ENCODE measurements at regions of chr14 and their contacts with region 1.

Region 1: GRCh38 chr14:23555882-23556699 is at the start of gene THTPA:
- DNase-seq: peak; percentile 96
- ATAC-seq: peak; percentile 86
- H3K4me3 Mint-ChIP-seq: peak within 1 kb of the TSS; percentile 95
- H3K27ac Mint-ChIP-seq: peak within 1 kb of the TSS; percentile 97
- H3K4me1 Mint-ChIP-seq: peaks cover 35% of the 10 kb centered on the region
- H3K27me3 Mint-ChIP-seq: no peaks in the 10 kb centered on the region
- total RNA-seq, gene THTPA: 7.3 to 9.8 TPM

Region 2: DNA sequence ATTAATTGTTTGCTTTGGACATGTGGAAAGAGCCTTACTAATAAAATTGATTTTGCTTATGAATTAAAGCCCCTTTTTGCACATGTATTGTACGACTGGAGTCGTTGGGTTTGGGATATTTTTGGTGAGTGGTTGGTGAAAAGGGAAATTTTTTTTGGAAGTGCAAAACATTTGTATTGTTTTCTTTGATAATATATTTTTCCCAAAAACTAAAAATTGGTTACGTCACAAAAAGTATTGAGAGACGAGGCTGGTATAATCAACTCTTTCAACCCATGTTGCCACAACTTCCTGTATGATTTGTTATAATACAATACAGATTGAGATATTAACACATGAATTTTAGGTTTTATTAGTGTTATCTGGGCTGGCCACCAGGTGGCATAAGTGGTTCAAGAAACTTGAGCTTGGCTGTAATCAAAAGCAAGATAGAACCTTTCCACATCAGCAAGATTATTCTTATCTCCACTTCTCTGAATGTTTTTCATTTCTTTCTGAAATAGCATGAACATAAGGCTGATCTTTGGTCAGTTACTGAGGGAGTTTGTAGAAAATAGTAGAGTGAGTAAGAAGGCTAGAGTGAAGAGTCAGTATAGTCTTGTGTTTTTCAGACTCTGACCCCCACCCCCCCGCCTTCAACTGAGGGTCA is 77.9 kb before region 1 on chr14:
- CTCF ChIA-PET with region 1: interaction called, 266 read pairs
- POLR2A ChIA-PET with region 1: interaction called, 9 read pairs
- DNase-seq: peak; percentile 81
- ATAC-seq: peak; percentile 52
- H3K4me3 Mint-ChIP-seq: no peak overlapping the region
- H3K27ac Mint-ChIP-seq: no peak overlapping the region
- H3K4me1 Mint-ChIP-seq: no peaks in the 10 kb centered on the region
- H3K27me3 Mint-ChIP-seq: no peaks in the 10 kb centered on the region

Region 3: GRCh38 chr14:23539248-23540140 is 16.6 kb before region 1 on chr14:
- CTCF ChIA-PET with region 1: interaction called, 32 read pairs
- POLR2A ChIA-PET with region 1: no interaction called
- DNase-seq: peak; percentile 41
- ATAC-seq: peak; percentile 62
- H3K4me3 Mint-ChIP-seq: no peak overlapping the region
- H3K27ac Mint-ChIP-seq: no peak overlapping the region
- H3K4me1 Mint-ChIP-seq: no peaks in the 10 kb centered on the region
- H3K27me3 Mint-ChIP-seq: peaks cover 2% of the 10 kb centered on the region

Region 4: DNA sequence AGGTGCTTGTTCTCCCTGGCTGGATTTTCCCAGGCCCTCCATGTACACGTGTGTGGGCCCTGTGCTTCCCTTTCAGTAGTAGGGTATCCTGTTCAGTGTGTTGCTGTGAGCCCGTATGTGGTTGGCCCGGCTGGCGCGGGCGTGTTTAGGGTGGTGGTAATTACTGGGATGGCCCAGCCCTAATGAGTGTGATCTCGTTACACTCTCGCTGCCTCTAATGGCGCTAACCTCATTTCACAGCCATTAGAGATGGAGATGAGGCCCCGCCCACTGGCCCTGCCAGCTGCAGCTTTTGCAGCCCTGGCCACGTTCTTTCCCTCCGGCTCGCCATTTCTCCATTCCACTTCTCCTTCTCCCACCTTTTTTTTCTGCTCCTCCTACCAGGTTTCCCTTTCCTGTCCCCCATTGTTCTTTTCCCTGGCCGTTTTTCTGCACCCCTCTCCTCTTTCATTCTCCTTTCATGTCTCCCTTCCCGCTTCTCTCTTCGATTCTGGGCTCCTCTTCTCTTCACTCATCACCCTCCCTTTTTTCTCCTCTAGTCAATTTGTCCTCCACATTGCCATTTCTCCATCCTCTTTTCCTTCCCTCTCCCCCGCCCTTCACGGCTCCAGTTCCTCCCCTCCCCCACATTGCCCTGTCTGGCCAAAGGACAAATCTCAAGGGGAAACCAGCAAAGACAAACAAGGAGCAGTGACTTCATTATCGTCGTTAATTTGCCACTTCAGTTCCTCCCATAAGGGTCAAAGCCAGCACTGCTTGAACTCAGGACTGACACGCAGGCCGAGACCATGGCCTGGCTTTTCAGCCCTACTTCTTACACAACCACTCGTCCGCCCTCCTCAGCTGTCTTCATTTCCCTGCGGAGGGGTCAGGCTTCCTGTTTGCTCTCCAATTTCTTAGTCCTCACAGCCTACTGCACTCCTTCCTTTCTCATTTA is 11.3 kb before region 1 on chr14:
- CTCF ChIA-PET with region 1: interaction called, 32 read pairs
- POLR2A ChIA-PET with region 1: no interaction called
- DNase-seq: no peak
- ATAC-seq: no peak
- H3K4me3 Mint-ChIP-seq: no peak overlapping the region
- H3K27ac Mint-ChIP-seq: no peak overlapping the region
- H3K4me1 Mint-ChIP-seq: no peaks in the 10 kb centered on the region
- H3K27me3 Mint-ChIP-seq: peaks cover under 1% of the 10 kb centered on the region

Region 5: GRCh38 chr14:23567192-23568020 is 11.3 kb after region 1 on chr14 and contains the start of gene AP1G2:
- CTCF ChIA-PET with region 1: interaction called, 20 read pairs
- POLR2A ChIA-PET with region 1: interaction called, 13 read pairs
- DNase-seq: peak; percentile 92
- ATAC-seq: peak; percentile 97
- H3K4me3 Mint-ChIP-seq: peak within 1 kb of the TSS; percentile 100
- H3K27ac Mint-ChIP-seq: peak within 1 kb of the TSS; percentile 99
- H3K4me1 Mint-ChIP-seq: peaks cover 50% of the 10 kb centered on the region
- H3K27me3 Mint-ChIP-seq: peaks cover 5% of the 10 kb centered on the region
- total RNA-seq, gene AP1G2: 267 to 276 TPM

Region 6: DNA sequence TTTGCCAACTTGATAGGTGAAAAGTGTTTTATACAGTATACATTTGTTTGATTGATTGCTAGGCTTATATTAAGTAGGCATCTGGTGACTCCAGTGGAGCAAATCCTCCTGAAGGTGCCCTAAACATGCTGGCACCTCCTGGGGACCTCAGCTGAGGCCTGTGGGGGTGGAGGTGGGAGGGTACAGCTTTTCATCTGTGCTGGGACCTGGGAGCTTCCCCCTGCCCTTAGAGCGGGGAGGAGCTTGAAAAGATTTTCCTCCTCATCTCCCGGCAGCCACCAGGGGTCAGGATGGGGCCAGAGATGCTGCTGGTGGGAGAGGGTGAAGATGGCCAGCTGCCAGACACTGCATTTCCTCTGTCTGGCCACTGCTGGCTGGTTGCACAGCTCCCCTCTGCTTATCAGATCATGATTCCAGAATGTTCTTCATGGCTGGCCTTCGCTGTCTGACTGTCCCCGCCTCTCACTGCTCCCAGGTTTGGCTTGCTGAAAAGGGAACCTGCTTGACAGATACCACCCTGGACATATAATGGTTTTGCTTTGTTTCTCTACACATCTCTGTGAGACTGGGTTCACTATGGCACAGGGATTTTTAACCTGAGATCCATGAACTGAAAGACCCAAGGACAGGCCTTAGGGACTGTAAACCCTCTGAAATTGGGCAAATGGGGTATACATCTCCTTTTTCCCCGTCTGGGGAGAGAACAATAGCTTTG is 33.0 kb after region 1 on chr14:
- CTCF ChIA-PET with region 1: no interaction called
- POLR2A ChIA-PET with region 1: no interaction called
- DNase-seq: peak; percentile 88
- ATAC-seq: peak; percentile 99
- H3K4me3 Mint-ChIP-seq: no peak overlapping the region
- H3K27ac Mint-ChIP-seq: no peak overlapping the region
- H3K4me1 Mint-ChIP-seq: peaks cover 11% of the 10 kb centered on the region
- H3K27me3 Mint-ChIP-seq: peaks cover 11% of the 10 kb centered on the region